Ovary (tissue), 10 donors: ENCODE measurements at regions of chr1 and their contacts with region 1.

Region 1: DNA sequence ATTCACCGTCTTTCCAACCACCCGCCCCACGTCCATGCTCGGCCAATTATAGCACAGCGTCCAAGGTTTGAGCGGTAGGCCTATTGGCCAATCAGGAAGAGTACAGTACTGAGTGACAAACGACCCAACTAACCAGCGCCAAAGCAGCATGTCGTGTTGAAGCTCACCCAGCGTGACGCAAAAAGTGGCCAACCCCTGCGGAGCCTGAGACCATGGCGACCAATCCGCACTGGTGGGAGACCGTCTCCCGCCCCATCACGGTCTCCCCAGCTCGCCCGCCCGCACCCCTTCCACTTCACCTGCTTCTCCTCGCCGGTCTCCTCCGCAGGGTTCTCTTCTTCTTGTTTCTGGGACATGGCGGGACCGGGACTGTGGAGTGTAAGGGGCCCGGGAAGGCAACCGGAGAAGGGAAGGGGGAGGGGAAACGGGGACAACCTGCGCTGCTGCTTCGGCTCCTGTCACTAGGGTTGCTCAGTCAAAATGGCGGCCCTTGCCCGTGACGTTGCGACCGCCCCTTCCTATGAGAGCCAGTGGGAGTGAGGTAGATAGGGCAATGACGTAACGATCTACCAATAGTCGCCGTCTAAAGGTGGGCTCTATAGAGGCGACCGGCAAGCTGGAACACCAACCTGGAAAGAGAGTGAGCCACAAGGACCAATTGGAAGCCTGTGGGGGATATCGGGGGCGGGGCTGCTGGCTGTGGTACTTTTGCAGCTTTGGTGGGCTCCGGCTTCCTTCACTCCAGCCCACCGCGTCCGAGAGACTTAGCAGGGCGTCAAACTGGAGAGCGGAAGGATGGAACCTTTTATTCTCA is at the start of gene ENSA:
- DNase-seq: peak; percentile 95 to 98 (median 96)
- H3K4me3 ChIP-seq: peak within 1 kb of the TSS; percentile 81
- H3K27ac ChIP-seq: peak within 1 kb of the TSS; percentile 80 to 99
- H3K4me1 ChIP-seq: peaks cover 8% of the 10 kb centered on the region
- H3K27me3 ChIP-seq: no peaks in the 10 kb centered on the region
- CTCF ChIP-seq: no peak
- EP300 ChIP-seq: peak; percentile 84
- POLR2A ChIP-seq: peak; percentile 98
- total RNA-seq, gene ENSA: 134 to 196 (median 152) TPM

Region 2: DNA sequence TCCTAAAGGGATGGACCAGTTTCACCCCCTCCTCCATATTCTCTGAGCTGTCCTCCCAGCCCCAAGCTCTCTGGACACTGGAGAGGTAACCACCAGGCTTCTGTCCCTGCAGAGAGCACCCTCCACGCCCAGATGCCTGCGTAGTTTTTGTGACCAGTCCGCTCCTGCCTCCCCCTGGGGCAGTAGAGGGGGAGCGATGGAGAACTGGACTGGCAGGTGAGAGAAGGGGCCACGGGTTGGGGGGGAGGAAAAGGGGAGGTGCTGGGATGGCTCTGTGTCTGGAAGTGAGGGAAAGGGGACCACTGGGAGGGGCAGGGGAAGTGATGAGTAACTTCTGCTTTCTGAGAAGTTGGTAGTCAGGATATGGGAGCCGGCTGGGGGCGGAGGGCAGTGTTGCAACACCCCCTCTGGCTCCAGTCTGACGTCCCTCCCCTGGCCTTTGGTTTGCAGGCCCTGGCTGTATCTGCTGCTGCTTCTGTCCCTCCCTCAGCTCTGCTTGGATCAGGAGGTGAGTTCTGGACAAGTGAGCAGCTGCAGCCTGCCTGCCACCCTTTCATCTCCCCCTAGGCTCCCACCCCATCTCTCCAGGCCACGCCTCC is 77.1 kb before region 1 on chr1:
- intact Hi-C with region 1: loop called in 1 of 4 experiments (anchors 10 kb)
- DNase-seq: peak; percentile 89 to 97 (median 90)
- H3K4me3 ChIP-seq: no peak overlapping the region
- H3K27ac ChIP-seq: peak overlapping the region; percentile 85 to 89
- H3K4me1 ChIP-seq: peaks cover 16% of the 10 kb centered on the region
- H3K27me3 ChIP-seq: no peaks in the 10 kb centered on the region
- CTCF ChIP-seq: no peak
- EP300 ChIP-seq: peak; percentile 97
- POLR2A ChIP-seq: peak; percentile 43

Region 3: DNA sequence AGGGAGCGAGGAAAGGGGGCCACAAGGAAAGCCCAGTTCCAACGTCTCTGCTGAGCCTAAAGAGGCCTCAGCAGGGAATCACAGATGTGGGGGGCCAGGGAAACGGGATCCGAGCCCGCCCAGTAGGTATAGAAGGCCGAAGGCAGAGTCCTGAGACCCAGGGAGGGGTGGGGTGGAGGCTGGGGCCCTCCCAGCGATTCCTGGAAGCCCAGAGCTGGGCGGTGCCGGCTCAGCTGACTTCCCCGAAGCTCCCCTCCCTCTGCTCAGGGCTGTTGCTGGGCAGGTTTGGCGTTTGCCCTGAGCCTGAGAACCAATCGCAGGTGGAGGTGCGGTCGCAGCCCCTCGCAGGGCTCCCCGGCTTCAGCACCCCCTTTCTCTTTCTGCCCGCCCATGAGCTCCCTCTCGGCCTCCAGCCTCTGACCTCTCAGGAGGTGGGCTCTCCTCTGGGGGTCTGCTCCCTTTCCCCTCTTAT is 67.3 kb before region 1 on chr1:
- intact Hi-C with region 1: loop called (anchors 5 to 10 kb)
- DNase-seq: peak; percentile 91 to 95 (median 93)
- H3K4me3 ChIP-seq: peak overlapping the region; percentile 56
- H3K27ac ChIP-seq: peak overlapping the region; percentile 96 to 99
- H3K4me1 ChIP-seq: peaks cover 45% of the 10 kb centered on the region
- H3K27me3 ChIP-seq: no peaks in the 10 kb centered on the region
- CTCF ChIP-seq: no peak
- EP300 ChIP-seq: peak; percentile 99
- POLR2A ChIP-seq: peak; percentile 29

Region 4: GRCh38 chr1:150578965-150579798 is 50.1 kb before region 1 on chr1 and contains the start of gene MCL1:
- intact Hi-C with region 1: loop called in 1 of 4 experiments (anchors 1 kb)
- DNase-seq: peak; percentile 90 to 96 (median 94)
- H3K4me3 ChIP-seq: peak within 1 kb of the TSS; percentile 93
- H3K27ac ChIP-seq: peak within 1 kb of the TSS; percentile 96 to 97
- H3K4me1 ChIP-seq: peaks cover 9% of the 10 kb centered on the region
- H3K27me3 ChIP-seq: no peaks in the 10 kb centered on the region
- CTCF ChIP-seq: peak in 2 of 3 donors; percentile 20 to 40
- EP300 ChIP-seq: peak; percentile 79
- POLR2A ChIP-seq: peak; percentile 91
- total RNA-seq, gene MCL1: 91.1 to 280 (median 145) TPM

Region 5: DNA sequence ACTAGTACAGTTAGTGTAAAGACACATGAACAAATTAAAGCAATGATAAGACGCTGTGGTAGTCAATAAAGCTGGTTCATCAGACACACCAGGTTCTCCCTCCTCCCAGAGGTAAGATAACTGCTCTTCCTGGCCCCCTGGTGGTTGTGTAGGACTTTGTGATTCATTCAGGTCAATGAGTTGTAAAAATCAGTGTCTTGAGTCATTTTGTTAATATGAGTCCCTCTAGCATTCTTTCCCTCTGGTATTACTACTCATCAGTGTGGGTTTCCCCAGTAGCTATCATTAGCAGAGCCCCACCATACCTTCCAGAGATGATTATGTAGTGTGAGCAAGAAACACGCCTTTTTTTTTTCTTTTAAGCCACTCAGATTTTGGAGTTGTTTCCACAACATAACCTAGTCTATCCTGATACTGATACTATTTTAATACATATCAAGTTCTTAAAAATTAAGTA is 293.2 kb after region 1 on chr1:
- intact Hi-C with region 1: no loop called
- DNase-seq: peak; percentile 46 to 83 (median 60)
- H3K4me3 ChIP-seq: no peak overlapping the region
- H3K27ac ChIP-seq: no peak overlapping the region
- H3K4me1 ChIP-seq: no peaks in the 10 kb centered on the region
- H3K27me3 ChIP-seq: no peaks in the 10 kb centered on the region
- CTCF ChIP-seq: peak in 2 of 3 donors; percentile 55 to 56
- EP300 ChIP-seq: no peak
- POLR2A ChIP-seq: no peak

Region 6: DNA sequence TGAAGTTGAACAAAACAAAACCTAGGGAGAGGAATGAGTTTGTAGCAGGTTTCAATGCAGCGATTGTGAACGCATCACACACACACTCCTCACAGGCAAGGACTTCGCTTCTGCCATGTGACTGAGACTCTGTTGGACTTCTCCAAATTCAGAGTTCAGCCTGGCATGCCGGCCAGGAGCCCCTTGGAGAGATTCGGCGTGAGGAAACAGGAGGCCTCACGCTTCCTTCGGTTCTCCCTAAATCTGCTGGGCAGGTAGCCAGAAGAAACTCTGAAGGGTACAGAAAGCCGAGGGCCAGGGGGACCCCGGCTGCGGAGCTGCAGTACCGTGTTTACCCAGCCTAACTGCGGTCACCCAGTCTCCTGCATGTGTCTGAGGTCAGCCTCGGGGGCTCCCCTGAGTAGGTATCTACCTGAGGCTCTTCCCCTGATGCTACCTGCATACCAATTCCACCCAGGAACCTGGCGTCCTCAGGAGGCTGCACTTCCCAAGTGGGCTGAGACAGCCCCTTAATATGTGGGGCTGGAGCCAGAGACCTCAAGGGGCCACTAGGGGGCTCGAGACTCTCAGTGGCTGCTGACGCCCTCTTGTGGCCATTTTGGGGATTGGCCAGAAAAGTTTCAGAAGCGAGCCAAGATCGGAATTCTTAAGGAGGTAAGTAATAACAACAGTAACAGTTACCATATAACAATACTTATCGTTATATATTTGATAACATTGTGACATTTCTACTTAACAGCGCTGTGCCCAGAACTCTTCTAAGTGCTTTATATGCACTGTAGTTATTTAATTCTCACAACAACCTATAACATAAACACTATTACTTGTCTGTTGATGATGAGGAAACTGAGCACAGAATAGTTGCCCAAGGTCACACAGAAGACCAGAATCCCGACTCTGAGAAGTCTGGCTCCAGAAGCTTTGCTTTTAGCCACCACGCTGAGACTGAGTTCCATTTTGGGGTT is 350.1 kb after region 1 on chr1:
- intact Hi-C with region 1: loop called in 1 of 4 experiments (anchors 5 kb)
- DNase-seq: peak; percentile 86 to 94 (median 90)
- H3K4me3 ChIP-seq: no peak overlapping the region
- H3K27ac ChIP-seq: peak overlapping the region; percentile 24 to 58
- H3K4me1 ChIP-seq: peaks cover 6% of the 10 kb centered on the region
- H3K27me3 ChIP-seq: no peaks in the 10 kb centered on the region
- CTCF ChIP-seq: peak; percentile 98 to 100 (median 99)
- EP300 ChIP-seq: no peak
- POLR2A ChIP-seq: no peak